Ovary (tissue), 10 donors: ENCODE measurements at regions of chr4 and their contacts with region 1.

Region 1: GRCh38 chr4:171765514-171765913 is 47.7 kb upstream of the GALNTL6 start:
- DNase-seq: no peak
- H3K4me3 ChIP-seq: no peak overlapping the region
- H3K27ac ChIP-seq: no peak overlapping the region
- H3K4me1 ChIP-seq: no peaks in the 10 kb centered on the region
- H3K27me3 ChIP-seq: no peaks in the 10 kb centered on the region
- CTCF ChIP-seq: no peak
- EP300 ChIP-seq: no peak
- POLR2A ChIP-seq: no peak

Region 2: DNA sequence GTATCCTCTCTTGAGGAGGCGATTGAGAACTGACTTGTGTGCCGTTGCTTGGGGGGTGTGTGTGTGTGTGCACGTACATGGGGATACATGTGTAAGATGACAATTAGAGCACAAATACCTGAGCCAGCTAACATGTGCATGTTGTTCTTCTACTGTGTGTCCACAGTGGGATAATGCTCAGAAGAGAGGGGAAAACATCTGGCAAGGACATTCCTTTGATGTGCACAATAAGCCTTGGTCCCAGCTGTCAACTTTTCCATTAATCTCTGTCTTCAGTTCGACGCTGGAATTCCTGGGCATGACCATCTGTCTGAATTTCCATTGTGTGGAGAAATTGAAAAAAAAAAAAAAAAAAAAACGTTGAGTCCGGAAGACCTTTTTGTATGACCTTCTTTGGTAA is 544.3 kb before region 1 on chr4:
- intact Hi-C with region 1: no loop called
- DNase-seq: no peak
- H3K4me3 ChIP-seq: no peak overlapping the region
- H3K27ac ChIP-seq: no peak overlapping the region
- H3K4me1 ChIP-seq: no peaks in the 10 kb centered on the region
- H3K27me3 ChIP-seq: no peaks in the 10 kb centered on the region
- CTCF ChIP-seq: no peak
- EP300 ChIP-seq: no peak
- POLR2A ChIP-seq: no peak

Region 3: GRCh38 chr4:171612907-171613306 is 152.6 kb before region 1 on chr4:
- intact Hi-C with region 1: loop called in 1 of 4 experiments (anchors 5 kb)
- DNase-seq: no peak
- H3K4me3 ChIP-seq: no peak overlapping the region
- H3K27ac ChIP-seq: no peak overlapping the region
- H3K4me1 ChIP-seq: no peaks in the 10 kb centered on the region
- H3K27me3 ChIP-seq: no peaks in the 10 kb centered on the region
- CTCF ChIP-seq: no peak
- EP300 ChIP-seq: no peak
- POLR2A ChIP-seq: no peak